MCF 10A (cell line): ENCODE measurements at regions of chr6 and their contacts with region 1.

Region 1: GRCh38 chr6:1136415-1136774 is 175.5 kb upstream of the FOXQ1 start:
- DNase-seq: peak; percentile 82
- H3K4me3 Mint-ChIP-seq: peak overlapping the region; percentile 52
- H3K27ac Mint-ChIP-seq: peak overlapping the region; percentile 74
- H3K4me1 Mint-ChIP-seq: peaks cover 26% of the 10 kb centered on the region
- H3K27me3 Mint-ChIP-seq: no peaks in the 10 kb centered on the region
- CTCF ChIP-seq: no peak

Region 2: DNA sequence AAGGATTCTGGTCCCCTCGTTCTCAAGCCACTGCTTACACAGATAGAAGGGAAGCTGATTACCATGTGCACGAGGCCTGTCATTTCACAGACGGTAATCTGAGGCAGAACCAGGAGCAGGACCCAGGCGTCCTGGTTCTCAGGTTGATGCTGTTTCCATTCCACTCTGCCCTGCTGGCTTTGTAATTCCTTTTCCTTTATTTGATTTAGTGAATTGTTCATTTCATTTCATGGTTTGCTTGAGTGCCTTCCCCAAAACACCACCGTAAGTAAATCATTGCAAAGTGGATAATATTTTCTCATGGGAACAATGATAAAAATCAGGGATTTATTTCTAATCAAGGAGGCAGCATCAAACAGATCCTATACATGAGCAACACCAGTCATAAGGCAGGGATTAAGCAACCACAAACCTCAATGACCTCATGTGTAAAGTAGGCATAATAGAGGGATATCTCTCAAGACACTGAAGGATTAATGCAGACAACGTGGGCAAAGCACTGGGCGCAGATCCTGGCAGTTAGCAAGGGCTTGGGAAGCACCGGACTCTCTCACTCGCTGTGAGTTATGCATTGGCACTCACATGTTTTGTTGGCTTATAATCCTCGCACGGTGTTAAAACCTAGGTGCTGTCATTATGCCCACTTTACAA is 54.0 kb before region 1 on chr6:
- CTCF ChIA-PET with region 1: interaction called, 4 read pairs
- POLR2A ChIA-PET with region 1: no interaction called
- intact Hi-C with region 1: loop called (anchors 5 kb)
- DNase-seq: peak; percentile 73
- H3K4me3 Mint-ChIP-seq: peak overlapping the region; percentile 44
- H3K27ac Mint-ChIP-seq: peak overlapping the region; percentile 73
- H3K4me1 Mint-ChIP-seq: peaks cover 16% of the 10 kb centered on the region
- H3K27me3 Mint-ChIP-seq: no peaks in the 10 kb centered on the region
- CTCF ChIP-seq: no peak

Region 3: GRCh38 chr6:1110164-1110563 is 26.2 kb before region 1 on chr6:
- CTCF ChIA-PET with region 1: interaction called, 3 read pairs
- POLR2A ChIA-PET with region 1: interaction called, 53 read pairs
- intact Hi-C with region 1: no loop called
- DNase-seq: no peak
- H3K4me3 Mint-ChIP-seq: no peak overlapping the region
- H3K27ac Mint-ChIP-seq: peak overlapping the region; percentile 99
- H3K4me1 Mint-ChIP-seq: peaks cover 29% of the 10 kb centered on the region
- H3K27me3 Mint-ChIP-seq: no peaks in the 10 kb centered on the region
- CTCF ChIP-seq: no peak

Region 4: GRCh38 chr6:1190366-1190765 is 54.0 kb after region 1 on chr6:
- CTCF ChIA-PET with region 1: no interaction called
- POLR2A ChIA-PET with region 1: interaction called, 12 read pairs
- intact Hi-C with region 1: no loop called
- DNase-seq: peak; percentile 87
- H3K4me3 Mint-ChIP-seq: peak overlapping the region; percentile 41
- H3K27ac Mint-ChIP-seq: peak overlapping the region; percentile 92
- H3K4me1 Mint-ChIP-seq: peaks cover 22% of the 10 kb centered on the region
- H3K27me3 Mint-ChIP-seq: no peaks in the 10 kb centered on the region
- CTCF ChIP-seq: no peak

Region 5: GRCh38 chr6:1286972-1287610 is 150.7 kb after region 1 on chr6:
- CTCF ChIA-PET with region 1: no interaction called
- POLR2A ChIA-PET with region 1: interaction called, 3 read pairs
- intact Hi-C with region 1: loop called (anchors 5 kb)
- DNase-seq: peak; percentile 99
- H3K4me3 Mint-ChIP-seq: peak overlapping the region; percentile 66
- H3K27ac Mint-ChIP-seq: peak overlapping the region; percentile 98
- H3K4me1 Mint-ChIP-seq: peaks cover 26% of the 10 kb centered on the region
- H3K27me3 Mint-ChIP-seq: no peaks in the 10 kb centered on the region
- CTCF ChIP-seq: no peak